ENCODE measurements at regions of chr6 and their contacts with region 1.

Region 1: GRCh38 chr6:156776840-156777576 is at the start of gene ARID1B:
- DNase-seq: peak; percentile 83
- ATAC-seq: peak; percentile 57
- H3K4me3 ChIP-seq: peak within 1 kb of the TSS; percentile 99
- H3K27ac ChIP-seq: peak within 1 kb of the TSS; percentile 100
- H3K4me1 ChIP-seq: peaks cover 6% of the 10 kb centered on the region
- H3K27me3 ChIP-seq: no peaks in the 10 kb centered on the region
- CTCF ChIP-seq: no peak
- POLR2A ChIP-seq: peak; percentile 78
- RAD21 ChIP-seq: peak; percentile 29
- total RNA-seq, gene ARID1B: 14.5 and 22.8 TPM in 2 replicates

Region 2: DNA sequence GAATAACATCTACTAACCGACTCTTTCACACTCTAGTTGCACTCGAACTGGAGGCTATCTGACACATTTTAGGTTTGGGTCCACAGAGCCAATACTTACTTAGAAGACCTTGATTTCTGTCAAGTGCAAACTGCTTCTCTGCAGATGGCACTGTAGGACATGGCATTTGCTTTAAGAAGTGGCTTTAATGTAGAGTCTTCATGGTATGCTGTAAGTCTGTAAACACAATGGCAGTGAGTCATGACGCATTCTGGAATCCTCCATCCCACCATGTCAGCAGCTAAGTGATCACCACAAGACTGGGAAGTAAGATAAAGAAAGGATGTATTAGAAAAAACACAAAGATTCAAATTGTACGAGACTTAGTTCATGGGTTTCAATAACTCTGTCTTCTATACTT is 944.4 kb before region 1 on chr6:
- CTCF ChIA-PET with region 1: no interaction called
- POLR2A ChIA-PET with region 1: no interaction called
- dilution Hi-C with region 1: no loop called
- in situ Hi-C with region 1: no loop called
- intact Hi-C with region 1: loop called (anchors 5 kb)
- DNase-seq: peak; percentile 90
- ATAC-seq: peak; percentile 99
- H3K4me3 ChIP-seq: no peak overlapping the region
- H3K27ac ChIP-seq: peak overlapping the region; percentile 7; the same call in 1 of the 2 replicates
- H3K4me1 ChIP-seq: no peaks in the 10 kb centered on the region; the same call in 1 of the 2 replicates
- H3K27me3 ChIP-seq: no peaks in the 10 kb centered on the region
- CTCF ChIP-seq: peak; percentile 40
- POLR2A ChIP-seq: no peak
- RAD21 ChIP-seq: peak; percentile 55

Region 3: DNA sequence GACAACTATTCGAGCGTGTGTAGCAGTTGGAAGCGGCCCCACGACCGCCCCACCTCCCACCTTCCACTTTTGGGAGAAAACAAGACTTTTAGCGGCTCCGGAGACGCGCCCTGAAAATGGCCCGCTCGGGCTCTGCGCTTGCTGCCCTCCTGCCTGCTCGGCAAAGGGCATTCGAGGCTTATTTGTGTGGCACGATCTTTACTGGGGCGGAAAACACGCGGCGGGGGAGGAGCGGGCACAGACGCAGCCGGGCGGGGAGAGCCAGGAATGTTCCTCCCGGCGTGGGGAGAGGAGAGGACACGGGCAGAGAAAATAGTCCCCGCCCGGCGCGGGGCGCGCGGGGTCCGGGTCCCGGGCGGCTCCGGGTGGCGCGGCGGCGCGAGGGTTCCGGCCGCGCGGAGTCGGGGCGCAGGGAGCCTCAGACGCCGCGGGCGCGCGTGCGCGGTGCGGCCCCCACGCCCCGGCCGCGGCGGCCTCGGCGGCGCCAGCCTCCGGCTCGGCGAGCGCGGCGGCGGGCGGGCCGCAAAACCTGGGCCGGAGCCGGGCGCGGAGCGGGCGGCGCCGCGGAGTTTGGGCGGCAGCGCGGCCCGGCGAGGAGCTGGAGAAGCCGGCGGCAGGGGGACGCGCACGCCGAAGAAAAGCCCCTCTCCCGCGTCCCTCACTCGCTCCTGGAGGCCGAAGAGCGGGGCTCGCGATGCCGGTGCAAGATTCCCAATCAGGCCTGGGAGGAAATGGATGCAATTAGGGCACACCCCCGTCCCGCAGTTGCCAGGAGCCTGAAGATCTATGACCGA is 89.8 kb before region 1 on chr6:
- CTCF ChIA-PET with region 1: no interaction called
- POLR2A ChIA-PET with region 1: interaction called, 6 read pairs
- dilution Hi-C with region 1: no loop called
- in situ Hi-C with region 1: loop called (anchors 5 kb)
- intact Hi-C with region 1: loop called (anchors 1 kb)
- DNase-seq: peak; percentile 87
- ATAC-seq: peak; percentile 94
- H3K4me3 ChIP-seq: peak overlapping the region; percentile 74
- H3K27ac ChIP-seq: peak overlapping the region; percentile 99
- H3K4me1 ChIP-seq: no peaks in the 10 kb centered on the region
- H3K27me3 ChIP-seq: no peaks in the 10 kb centered on the region
- CTCF ChIP-seq: no peak
- POLR2A ChIP-seq: peak; percentile 77
- RAD21 ChIP-seq: no peak

Region 4: GRCh38 chr6:156953479-156954146 is 176.6 kb after region 1 on chr6:
- CTCF ChIA-PET with region 1: no interaction called
- POLR2A ChIA-PET with region 1: no interaction called
- dilution Hi-C with region 1: no loop called
- in situ Hi-C with region 1: loop called (anchors 10 kb)
- intact Hi-C with region 1: loop called (anchors 2 kb)
- DNase-seq: peak; percentile 99
- ATAC-seq: peak; percentile 86
- H3K4me3 ChIP-seq: no peak overlapping the region
- H3K27ac ChIP-seq: no peak overlapping the region
- H3K4me1 ChIP-seq: peaks cover 18% of the 10 kb centered on the region
- H3K27me3 ChIP-seq: no peaks in the 10 kb centered on the region
- CTCF ChIP-seq: peak; percentile 51
- POLR2A ChIP-seq: peak; percentile 44; the same call in 1 of the 2 replicates
- RAD21 ChIP-seq: peak; percentile 22; the same call in 1 of the 2 replicates

Region 5: GRCh38 chr6:157184202-157185020 is 407.4 kb after region 1 on chr6:
- CTCF ChIA-PET with region 1: interaction called, 3 read pairs
- POLR2A ChIA-PET with region 1: no interaction called
- dilution Hi-C with region 1: no loop called
- in situ Hi-C with region 1: no loop called
- intact Hi-C with region 1: loop called (anchors 5 kb)
- DNase-seq: peak; percentile 56
- ATAC-seq: peak; percentile 91
- H3K4me3 ChIP-seq: no peak overlapping the region
- H3K27ac ChIP-seq: no peak overlapping the region
- H3K4me1 ChIP-seq: peaks cover 3% of the 10 kb centered on the region; the same call in 1 of the 2 replicates
- H3K27me3 ChIP-seq: no peaks in the 10 kb centered on the region
- CTCF ChIP-seq: peak; percentile 89
- POLR2A ChIP-seq: no peak
- RAD21 ChIP-seq: peak; percentile 96